Activated B cell treated with CpG ODN at 0.5 μM for 24 hours (primary cell): ENCODE measurements at regions of chr9 and their contacts with region 1.

Region 1: DNA sequence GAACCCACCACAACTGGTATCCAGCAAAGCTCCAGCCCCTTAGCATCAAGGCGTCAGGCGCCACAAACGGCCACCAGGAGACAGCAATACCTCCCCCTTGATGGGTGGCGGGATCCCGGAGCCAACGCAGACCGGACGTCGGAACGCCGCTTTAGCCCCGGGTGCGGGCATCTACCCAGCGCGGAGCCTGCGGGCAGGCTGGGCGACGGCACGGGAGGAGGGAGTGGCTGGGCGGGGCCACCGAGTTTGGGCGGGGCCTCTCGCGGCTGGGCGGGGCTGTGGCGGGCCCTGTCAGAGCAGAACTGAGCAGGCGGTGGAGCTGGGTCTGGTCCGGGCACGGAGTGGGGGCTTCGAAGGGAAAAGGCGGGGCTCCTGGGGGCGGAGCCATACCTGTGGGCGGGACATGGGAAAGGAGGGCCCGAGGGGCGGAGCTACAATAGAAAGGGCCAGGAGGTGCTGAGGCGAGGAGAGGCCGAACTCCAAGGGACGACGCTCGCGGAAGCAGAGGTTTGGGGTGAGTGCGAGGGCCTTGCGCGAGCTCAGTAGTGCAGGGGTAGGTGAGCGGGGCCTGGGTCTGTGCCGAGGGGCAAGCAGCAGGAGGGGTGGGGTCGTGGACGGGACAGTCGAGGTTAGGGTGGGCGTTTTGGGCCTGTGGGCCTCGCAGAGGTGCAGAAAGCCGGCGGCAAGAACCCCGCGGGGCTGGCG is 40.2 kb upstream of the GARNL3 start:
- DNase-seq: peak; percentile 94
- ATAC-seq: peak; percentile 79
- H3K4me3 Mint-ChIP-seq: peak overlapping the region; percentile 85
- H3K27ac Mint-ChIP-seq: peak overlapping the region; percentile 73
- H3K4me1 Mint-ChIP-seq: peaks cover 41% of the 10 kb centered on the region
- H3K27me3 Mint-ChIP-seq: peaks cover 3% of the 10 kb centered on the region
- CTCF ChIP-seq: no peak

Region 2: GRCh38 chr9:126914458-126915280 is 309.7 kb before region 1 on chr9 and contains the start of gene RALGPS1:
- CTCF ChIA-PET with region 1: no interaction called
- POLR2A ChIA-PET with region 1: no interaction called
- intact Hi-C with region 1: loop called (anchors 1 kb)
- DNase-seq: peak; percentile 94
- ATAC-seq: peak; percentile 96
- H3K4me3 Mint-ChIP-seq: peak within 1 kb of the TSS; percentile 81
- H3K27ac Mint-ChIP-seq: peak within 1 kb of the TSS; percentile 56
- H3K4me1 Mint-ChIP-seq: peaks cover 10% of the 10 kb centered on the region
- H3K27me3 Mint-ChIP-seq: peaks cover 6% of the 10 kb centered on the region
- CTCF ChIP-seq: no peak
- total RNA-seq, gene RALGPS1: 14.7 and 21.7 TPM in 2 replicates

Region 3: GRCh38 chr9:127112056-127112455 is 112.3 kb before region 1 on chr9:
- CTCF ChIA-PET with region 1: no interaction called
- POLR2A ChIA-PET with region 1: no interaction called
- intact Hi-C with region 1: no loop called
- DNase-seq: no peak
- ATAC-seq: no peak
- H3K4me3 Mint-ChIP-seq: no peak overlapping the region
- H3K27ac Mint-ChIP-seq: no peak overlapping the region
- H3K4me1 Mint-ChIP-seq: peaks cover 11% of the 10 kb centered on the region
- H3K27me3 Mint-ChIP-seq: no peaks in the 10 kb centered on the region
- CTCF ChIP-seq: no peak

Region 4: GRCh38 chr9:127244609-127245601 is 20.6 kb after region 1 on chr9:
- CTCF ChIA-PET with region 1: interaction called, 5 read pairs
- POLR2A ChIA-PET with region 1: interaction called, 16 read pairs
- intact Hi-C with region 1: loop called (anchors 1 kb)
- DNase-seq: peak; percentile 91
- ATAC-seq: peak; percentile 100
- H3K4me3 Mint-ChIP-seq: peak overlapping the region; percentile 90
- H3K27ac Mint-ChIP-seq: peak overlapping the region; percentile 86
- H3K4me1 Mint-ChIP-seq: peaks cover 11% of the 10 kb centered on the region
- H3K27me3 Mint-ChIP-seq: no peaks in the 10 kb centered on the region
- CTCF ChIP-seq: no peak

Region 5: GRCh38 chr9:127283917-127284316 is 59.6 kb after region 1 on chr9:
- CTCF ChIA-PET with region 1: no interaction called
- POLR2A ChIA-PET with region 1: no interaction called
- intact Hi-C with region 1: no loop called
- DNase-seq: no peak
- ATAC-seq: no peak
- H3K4me3 Mint-ChIP-seq: no peak overlapping the region
- H3K27ac Mint-ChIP-seq: no peak overlapping the region
- H3K4me1 Mint-ChIP-seq: peaks cover 11% of the 10 kb centered on the region
- H3K27me3 Mint-ChIP-seq: no peaks in the 10 kb centered on the region
- CTCF ChIP-seq: no peak

Region 6: GRCh38 chr9:127423934-127424675 is 199.8 kb after region 1 on chr9 and contains the start of gene ZNF79:
- CTCF ChIA-PET with region 1: no interaction called
- POLR2A ChIA-PET with region 1: interaction called, 12 read pairs
- intact Hi-C with region 1: no loop called
- DNase-seq: peak; percentile 93
- ATAC-seq: peak; percentile 94
- H3K4me3 Mint-ChIP-seq: peak within 1 kb of the TSS; percentile 99
- H3K27ac Mint-ChIP-seq: peak within 1 kb of the TSS; percentile 98
- H3K4me1 Mint-ChIP-seq: peaks cover 41% of the 10 kb centered on the region
- H3K27me3 Mint-ChIP-seq: no peaks in the 10 kb centered on the region
- CTCF ChIP-seq: no peak
- total RNA-seq, gene ZNF79: 13.5 and 14.0 TPM in 2 replicates

Region 7: DNA sequence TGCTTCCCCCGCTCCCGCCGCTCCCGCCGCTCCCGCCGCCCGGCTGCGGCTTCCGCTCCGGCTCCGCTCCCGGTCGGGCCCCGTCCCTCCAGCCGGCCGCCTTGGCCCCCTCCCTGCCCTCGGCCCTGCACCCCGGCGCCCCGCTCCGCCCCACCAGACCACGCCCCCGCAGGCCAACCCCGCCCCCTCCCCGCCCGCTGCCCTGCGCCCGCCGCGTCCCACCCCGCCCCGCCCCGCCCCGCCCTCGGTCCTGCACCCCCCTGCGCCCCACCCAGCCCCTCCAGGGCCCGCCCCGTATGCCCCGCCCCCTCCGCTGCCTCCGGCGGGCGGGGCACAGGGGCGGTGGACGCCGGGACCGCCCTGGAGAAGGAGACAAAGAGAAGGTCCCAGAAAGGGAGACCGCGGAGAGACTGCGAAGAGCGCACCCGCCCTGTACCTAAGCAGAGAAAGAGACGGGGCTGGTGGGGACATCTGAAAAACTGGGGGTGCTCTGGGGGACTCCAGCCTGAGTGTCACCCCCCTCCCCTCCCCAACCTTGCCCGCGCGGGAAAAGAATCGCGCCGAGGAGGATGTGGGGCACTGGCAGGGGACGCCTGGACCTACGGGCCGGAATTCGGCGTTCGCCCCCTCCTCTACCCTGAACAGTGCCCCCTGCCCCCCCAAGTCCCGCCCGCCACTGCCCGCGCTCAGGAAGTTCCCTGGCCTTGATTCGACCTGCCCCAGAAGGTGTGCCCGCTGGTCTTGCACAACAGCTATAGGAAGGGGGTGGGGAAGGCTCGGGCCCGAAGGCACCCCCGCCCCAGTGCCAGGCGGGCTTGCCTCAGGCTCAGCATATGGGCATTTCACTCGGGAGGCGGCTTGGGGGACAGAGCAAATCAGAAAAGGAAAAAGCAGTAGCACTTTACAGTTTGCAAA is 344.9 kb after region 1 on chr9:
- CTCF ChIA-PET with region 1: no interaction called
- POLR2A ChIA-PET with region 1: no interaction called
- intact Hi-C with region 1: loop called (anchors 5 kb)
- DNase-seq: peak; percentile 68
- ATAC-seq: peak; percentile 93
- H3K4me3 Mint-ChIP-seq: peak overlapping the region; percentile 86
- H3K27ac Mint-ChIP-seq: peak overlapping the region; percentile 43
- H3K4me1 Mint-ChIP-seq: peaks cover 11% of the 10 kb centered on the region
- H3K27me3 Mint-ChIP-seq: no peaks in the 10 kb centered on the region
- CTCF ChIP-seq: no peak